ENCODE measurements at regions of chr5 and their contacts with region 1.

Region 1: DNA sequence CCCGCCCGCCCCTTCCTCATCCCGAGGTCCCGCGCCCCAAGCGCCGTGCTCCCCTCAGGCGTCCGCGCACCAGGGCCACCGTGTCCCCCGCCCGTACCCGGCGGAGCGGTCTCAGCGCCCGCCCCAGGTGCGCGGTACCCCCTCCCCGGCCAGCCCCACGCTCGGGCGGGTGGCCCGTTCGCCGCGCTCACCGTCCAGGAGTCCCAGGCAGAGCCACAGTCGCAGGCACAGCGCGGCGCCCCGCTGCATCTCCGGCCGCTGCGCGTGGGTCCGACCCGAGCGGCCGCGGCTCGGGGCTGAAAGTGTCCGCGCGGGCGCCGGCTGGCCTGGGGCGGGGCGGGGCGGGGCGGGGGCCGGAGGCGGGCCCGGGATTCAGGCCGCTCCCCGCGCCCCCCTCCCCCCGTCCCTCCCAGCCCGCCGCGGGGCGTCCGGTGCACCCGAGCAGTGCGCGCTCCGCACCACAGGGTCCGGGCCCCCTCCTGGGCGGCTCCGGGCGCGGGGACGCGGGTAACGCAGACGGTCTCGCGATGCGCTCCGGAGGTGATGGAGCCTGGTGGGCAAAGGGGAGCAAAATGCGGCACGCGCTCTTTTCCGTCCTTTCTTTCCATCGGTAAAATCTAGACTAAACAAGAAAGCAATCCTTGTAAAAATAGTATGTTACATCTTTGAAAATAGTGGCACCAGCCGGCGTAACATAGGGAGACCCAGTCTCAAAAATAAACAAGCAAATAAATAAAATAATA is at the start of gene FLT4:
- DNase-seq: peak in 3 of 4 experiments; percentile 49 to 84 (median 83)
- ATAC-seq: peak; percentile 53
- H3K4me3 ChIP-seq: peak within 1 kb of the TSS; percentile 22
- H3K27ac ChIP-seq: no peak within 1 kb of the TSS
- H3K4me1 ChIP-seq: peaks cover 7 to 30% of the 10 kb centered on the region in 2 experiments; a peak in 4 of 5 replicates
- H3K27me3 ChIP-seq: peaks cover 45 to 81% of the 10 kb centered on the region in 2 experiments
- CTCF ChIP-seq: no peak
- EP300 ChIP-seq: no peak
- POLR2A ChIP-seq: no peak
- RAD21 ChIP-seq: no peak
- polyA plus RNA-seq, gene FLT4: 0.01 TPM in 1 of 2 experiments, not detected in the other

Region 2: GRCh38 chr5:180209137-180209581 is 440.3 kb before region 1 on chr5 and contains the start of gene RASGEF1C:
- CTCF ChIA-PET with region 1: no interaction called
- POLR2A ChIA-PET with region 1: no interaction called
- in situ Hi-C with region 1: loop called (anchors 10 kb)
- intact Hi-C with region 1: no loop called
- DNase-seq: peak; percentile 86 to 89 (median 88)
- ATAC-seq: peak; percentile 95
- H3K4me3 ChIP-seq: peak within 1 kb of the TSS; percentile 35
- H3K27ac ChIP-seq: no peak within 1 kb of the TSS
- H3K4me1 ChIP-seq: peaks cover 8 to 41% of the 10 kb centered on the region in 2 experiments; a peak in 4 of 5 replicates
- H3K27me3 ChIP-seq: peaks cover 0 to 36% of the 10 kb centered on the region in 2 experiments; a peak in 3 of 5 replicates
- CTCF ChIP-seq: peak in 2 of 3 experiments; percentile 70 to 94; a peak in 5 of 6 replicates
- EP300 ChIP-seq: no peak
- POLR2A ChIP-seq: no peak
- RAD21 ChIP-seq: peak in 1 of 2 experiments; percentile 56; a peak in 3 of 4 replicates
- polyA plus RNA-seq, gene RASGEF1C: not detected

Region 3: GRCh38 chr5:180704368-180704869 is 55.0 kb after region 1 on chr5:
- CTCF ChIA-PET with region 1: no interaction called
- POLR2A ChIA-PET with region 1: no interaction called
- in situ Hi-C with region 1: no loop called
- intact Hi-C with region 1: no loop called
- DNase-seq: peak; percentile 26 to 66 (median 32)
- ATAC-seq: peak; percentile 77
- H3K4me3 ChIP-seq: no peak overlapping the region
- H3K27ac ChIP-seq: no peak overlapping the region
- H3K4me1 ChIP-seq: peaks cover 0 to 5% of the 10 kb centered on the region in 2 experiments; a peak in 1 of 5 replicates
- H3K27me3 ChIP-seq: peaks cover 4 to 16% of the 10 kb centered on the region in 2 experiments; a peak in 3 of 5 replicates
- CTCF ChIP-seq: no peak
- EP300 ChIP-seq: peak; percentile 53; the same call in 1 of the 2 replicates
- POLR2A ChIP-seq: no peak
- RAD21 ChIP-seq: no peak

Measured in K562 (cell line).